ENCODE measurements at regions of chr15 and their contacts with region 1.

Region 1: DNA sequence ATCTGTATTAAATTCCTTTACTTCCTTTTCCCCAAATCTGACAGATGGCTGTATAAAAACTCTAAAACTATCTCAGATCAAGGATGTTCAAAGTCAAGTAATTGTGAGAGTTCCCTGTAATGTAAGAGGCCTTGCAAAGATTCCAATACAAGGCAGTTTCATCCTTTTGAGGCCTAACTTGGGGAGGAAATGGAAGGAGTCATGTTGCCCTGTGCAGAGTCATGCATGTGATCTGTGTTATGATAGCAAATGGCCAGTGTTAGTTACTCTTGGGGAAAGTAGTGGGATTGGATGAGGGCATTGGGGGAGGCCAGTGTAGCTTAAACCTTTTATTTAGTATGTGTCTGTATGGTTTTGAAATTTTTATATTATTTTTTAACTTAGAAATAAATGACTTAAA is 23.7 kb upstream of the FBXL22 start:
- DNase-seq: no peak
- H3K4me3 ChIP-seq: no peak overlapping the region
- H3K27ac ChIP-seq: no peak overlapping the region
- H3K4me1 ChIP-seq: no peaks in the 10 kb centered on the region
- H3K27me3 ChIP-seq: no peaks in the 10 kb centered on the region
- CTCF ChIP-seq: no peak

Region 2: DNA sequence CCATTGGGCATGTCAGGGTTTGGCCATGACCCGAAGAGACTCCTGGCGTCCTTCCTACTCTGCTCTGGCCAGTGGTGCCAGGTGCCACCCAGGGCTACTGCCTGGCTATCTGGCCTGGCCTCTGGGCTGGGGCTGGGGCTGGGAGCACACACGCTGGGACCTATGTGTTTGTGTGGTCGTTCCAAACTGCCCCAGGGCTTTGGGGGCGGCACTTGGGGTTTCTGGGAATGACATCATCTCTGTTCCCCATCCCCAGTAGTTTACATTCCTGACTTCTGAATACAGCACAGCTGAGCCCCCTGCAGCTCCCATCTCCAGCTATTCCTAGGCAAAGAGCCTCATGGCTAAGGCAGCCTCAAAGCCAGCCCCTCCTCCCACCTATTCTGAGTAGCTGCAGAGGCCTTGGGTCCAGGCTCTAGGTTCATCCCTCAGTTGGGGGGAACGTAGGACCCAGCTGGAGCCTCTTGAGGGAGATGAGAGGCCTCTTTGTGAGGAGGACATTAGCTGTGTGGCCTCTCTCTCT is 1292.5 kb after region 1 on chr15:
- CTCF ChIA-PET with region 1: interaction called, 15 read pairs
- POLR2A ChIA-PET with region 1: no interaction called
- intact Hi-C with region 1: no loop called
- DNase-seq: peak; percentile 31
- H3K4me3 ChIP-seq: no peak overlapping the region
- H3K27ac ChIP-seq: no peak overlapping the region
- H3K4me1 ChIP-seq: no peaks in the 10 kb centered on the region
- H3K27me3 ChIP-seq: no peaks in the 10 kb centered on the region
- CTCF ChIP-seq: no peak